Esophagus muscularis mucosa (tissue), 4 donors: ENCODE measurements at regions of chr1 and their contacts with region 1.

Region 1: GRCh38 chr1:61120998-61121397 is 38.6 kb downstream of the NFIA start:
- DNase-seq: no peak
- H3K4me3 ChIP-seq: peak overlapping the region in 3 of 4 donors; percentile 20 to 42 (median 20)
- H3K27ac ChIP-seq: peak overlapping the region; percentile 57 to 74 (median 58)
- H3K4me1 ChIP-seq: peaks cover 82 to 98% (median 97%) of the 10 kb centered on the region in 4 donors
- H3K27me3 ChIP-seq: no peaks in the 10 kb centered on the region
- CTCF ChIP-seq: no peak
- EP300 ChIP-seq: peak; percentile 45
- POLR2A ChIP-seq: no peak

Region 2: GRCh38 chr1:61170328-61171238 is 49.6 kb after region 1 on chr1:
- intact Hi-C with region 1: loop called (anchors 5 kb)
- DNase-seq: no peak
- H3K4me3 ChIP-seq: no peak overlapping the region
- H3K27ac ChIP-seq: peak overlapping the region; percentile 56 to 69 (median 64)
- H3K4me1 ChIP-seq: peaks cover 72 to 87% (median 82%) of the 10 kb centered on the region in 4 donors
- H3K27me3 ChIP-seq: no peaks in the 10 kb centered on the region
- CTCF ChIP-seq: no peak
- EP300 ChIP-seq: no peak
- POLR2A ChIP-seq: no peak